ENCODE measurements at regions of chr21 and their contacts with region 1.

Region 1: DNA sequence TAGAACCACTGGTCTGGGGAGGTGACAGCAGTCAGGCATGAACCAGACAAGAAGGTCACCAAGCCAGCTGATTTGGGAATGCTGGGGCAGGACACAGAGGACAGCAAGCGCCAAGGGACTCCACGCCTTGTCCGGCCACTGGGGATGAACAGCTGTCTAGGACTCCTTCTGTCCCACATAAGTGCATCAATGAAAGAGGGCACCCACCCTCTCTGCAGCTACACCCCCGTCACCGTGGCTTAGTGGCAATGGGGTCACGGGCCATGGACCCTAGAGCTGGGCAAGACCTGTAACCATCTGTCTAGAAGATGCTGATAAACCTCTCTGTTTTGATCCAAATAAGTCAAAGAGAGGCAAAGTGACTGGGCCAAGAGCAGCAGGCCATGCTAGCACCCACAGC is 16.8 kb downstream of the UBE2G2 start:
- DNase-seq: no peak
- H3K4me3 ChIP-seq: no peak overlapping the region
- H3K27ac ChIP-seq: no peak overlapping the region
- H3K4me1 ChIP-seq: no peaks in the 10 kb centered on the region
- H3K27me3 ChIP-seq: no peaks in the 10 kb centered on the region
- CTCF ChIP-seq: no peak
- EP300 ChIP-seq: no peak
- POLR2A ChIP-seq: no peak
- RAD21 ChIP-seq: no peak

Region 2: GRCh38 chr21:44752634-44753291 is 32.0 kb before region 1 on chr21:
- CTCF ChIA-PET with region 1: no interaction called
- POLR2A ChIA-PET with region 1: no interaction called
- DNase-seq: no peak
- H3K4me3 ChIP-seq: no peak overlapping the region
- H3K27ac ChIP-seq: no peak overlapping the region
- H3K4me1 ChIP-seq: peaks cover 0 to 33% (median 18%) of the 10 kb centered on the region in 4 experiments; a peak in 6 of 7 replicates
- H3K27me3 ChIP-seq: 0 out of 7 replicates have a peak, but pooled peaks cover 0 to 7% (median under 1%) of the 10 kb centered on the region in 4 experiments
- CTCF ChIP-seq: peak in 1 of 3 experiments; percentile 35; a peak in 1 of 4 replicates
- EP300 ChIP-seq: no peak
- POLR2A ChIP-seq: no peak
- RAD21 ChIP-seq: peak in 1 of 2 experiments; percentile 6; a peak in 1 of 4 replicates

Region 3: DNA sequence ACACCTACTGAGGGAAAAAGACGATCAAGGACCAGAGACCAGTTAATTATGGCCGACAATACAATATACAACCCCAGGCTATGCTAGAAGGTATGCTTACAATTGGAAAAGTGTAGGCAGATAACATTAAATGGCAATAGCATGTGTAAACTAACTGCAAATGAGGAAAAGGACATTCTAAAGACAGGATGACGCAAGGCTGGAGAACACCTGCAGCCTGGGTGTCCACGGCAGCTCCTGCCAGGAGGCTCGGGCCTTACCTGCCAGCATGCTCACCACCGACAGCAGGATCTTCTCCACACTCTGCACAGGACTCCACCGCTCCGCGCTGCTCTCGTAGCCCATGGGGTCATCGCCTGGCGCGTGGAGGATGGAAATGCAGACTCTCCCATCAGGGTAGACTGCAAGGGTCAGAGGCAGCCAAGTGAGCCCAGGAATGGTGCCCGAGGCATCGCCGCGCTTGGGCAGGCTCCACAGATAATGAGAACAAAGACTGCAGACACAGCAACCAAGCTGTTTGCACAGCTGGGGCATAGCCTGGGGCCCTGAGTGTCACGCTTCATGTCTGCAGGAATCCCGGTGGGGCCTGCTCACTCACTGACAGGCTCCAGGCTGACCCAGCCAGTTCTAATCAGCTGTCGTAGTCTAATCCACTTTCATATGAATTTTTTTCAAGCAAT is 11.4 kb before region 1 on chr21:
- CTCF ChIA-PET with region 1: interaction called, 10 read pairs
- POLR2A ChIA-PET with region 1: interaction called, 4 read pairs
- DNase-seq: no peak
- H3K4me3 ChIP-seq: no peak overlapping the region
- H3K27ac ChIP-seq: no peak overlapping the region
- H3K4me1 ChIP-seq: peaks cover 3 to 5% (median 4%) of the 10 kb centered on the region in 4 experiments; a peak in 6 of 7 replicates
- H3K27me3 ChIP-seq: no peaks in the 10 kb centered on the region; a peak in 1 of 7 replicates
- CTCF ChIP-seq: no peak
- EP300 ChIP-seq: no peak
- POLR2A ChIP-seq: no peak
- RAD21 ChIP-seq: no peak

Region 4: GRCh38 chr21:44958471-44959191 is 173.8 kb after region 1 on chr21:
- CTCF ChIA-PET with region 1: no interaction called
- POLR2A ChIA-PET with region 1: no interaction called
- DNase-seq: no peak
- H3K4me3 ChIP-seq: no peak overlapping the region
- H3K27ac ChIP-seq: 0 out of 2 replicates have a peak overlapping the region, but pooled peaks have one; percentile 38
- H3K4me1 ChIP-seq: no peaks in the 10 kb centered on the region
- H3K27me3 ChIP-seq: no peaks in the 10 kb centered on the region
- CTCF ChIP-seq: no peak
- EP300 ChIP-seq: no peak
- POLR2A ChIP-seq: no peak
- RAD21 ChIP-seq: no peak

Measured in H1 (cell line).